ENCODE measurements at regions of chr1 and their contacts with region 1.

Region 1: GRCh38 chr1:18575620-18576019 is 55.0 kb upstream of the PAX7 start:
- DNase-seq: no peak
- H3K4me3 ChIP-seq: no peak overlapping the region
- H3K27ac ChIP-seq: no peak overlapping the region
- H3K27me3 ChIP-seq: no peaks in the 10 kb centered on the region
- CTCF ChIP-seq: peak; percentile 70

Region 2: GRCh38 chr1:18556364-18556763 is 19.3 kb before region 1 on chr1:
- CTCF ChIA-PET with region 1: interaction called, 10 read pairs
- POLR2A ChIA-PET with region 1: no interaction called
- DNase-seq: no peak
- H3K4me3 ChIP-seq: no peak overlapping the region
- H3K27ac ChIP-seq: no peak overlapping the region
- H3K27me3 ChIP-seq: peaks cover 10% of the 10 kb centered on the region
- CTCF ChIP-seq: peak; percentile 49

Region 3: DNA sequence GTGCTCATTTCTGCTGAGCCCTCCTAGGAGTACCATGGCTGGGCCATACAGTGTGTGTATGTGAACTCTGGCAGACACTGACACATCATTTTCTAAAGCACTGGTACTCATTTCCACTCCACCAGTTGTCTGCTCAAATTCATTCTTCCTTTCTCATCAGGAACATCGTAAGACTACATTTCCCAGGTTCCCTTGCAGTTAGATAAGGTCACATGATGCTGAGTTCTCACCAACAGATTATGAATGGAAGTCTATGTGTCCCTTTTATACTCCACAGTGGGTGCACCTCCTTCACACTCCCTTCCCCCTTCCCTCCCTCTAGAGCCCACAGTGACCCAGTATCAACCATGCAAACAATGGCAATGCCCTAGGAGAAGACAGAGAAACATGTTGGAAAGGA is 16.7 kb after region 1 on chr1:
- CTCF ChIA-PET with region 1: interaction called, 12 read pairs
- POLR2A ChIA-PET with region 1: no interaction called
- DNase-seq: no peak
- H3K4me3 ChIP-seq: no peak overlapping the region
- H3K27ac ChIP-seq: no peak overlapping the region
- H3K27me3 ChIP-seq: no peaks in the 10 kb centered on the region
- CTCF ChIP-seq: no peak

Region 4: GRCh38 chr1:18632783-18633421 is 57.3 kb after region 1 on chr1:
- CTCF ChIA-PET with region 1: no interaction called
- POLR2A ChIA-PET with region 1: no interaction called
- DNase-seq: no peak
- H3K4me3 ChIP-seq: no peak overlapping the region
- H3K27ac ChIP-seq: no peak overlapping the region
- H3K27me3 ChIP-seq: peaks cover 93% of the 10 kb centered on the region
- CTCF ChIP-seq: no peak

Region 5: GRCh38 chr1:18716785-18717678 is 141.4 kb after region 1 on chr1:
- CTCF ChIA-PET with region 1: no interaction called
- POLR2A ChIA-PET with region 1: no interaction called
- DNase-seq: no peak
- H3K4me3 ChIP-seq: no peak overlapping the region
- H3K27ac ChIP-seq: no peak overlapping the region
- H3K27me3 ChIP-seq: peaks cover 22% of the 10 kb centered on the region
- CTCF ChIP-seq: no peak

Measured in AG04450 (cell line).